Psoas muscle (tissue), 8 donors: ENCODE measurements at regions of chr5 and their contacts with region 1.

Region 1: DNA sequence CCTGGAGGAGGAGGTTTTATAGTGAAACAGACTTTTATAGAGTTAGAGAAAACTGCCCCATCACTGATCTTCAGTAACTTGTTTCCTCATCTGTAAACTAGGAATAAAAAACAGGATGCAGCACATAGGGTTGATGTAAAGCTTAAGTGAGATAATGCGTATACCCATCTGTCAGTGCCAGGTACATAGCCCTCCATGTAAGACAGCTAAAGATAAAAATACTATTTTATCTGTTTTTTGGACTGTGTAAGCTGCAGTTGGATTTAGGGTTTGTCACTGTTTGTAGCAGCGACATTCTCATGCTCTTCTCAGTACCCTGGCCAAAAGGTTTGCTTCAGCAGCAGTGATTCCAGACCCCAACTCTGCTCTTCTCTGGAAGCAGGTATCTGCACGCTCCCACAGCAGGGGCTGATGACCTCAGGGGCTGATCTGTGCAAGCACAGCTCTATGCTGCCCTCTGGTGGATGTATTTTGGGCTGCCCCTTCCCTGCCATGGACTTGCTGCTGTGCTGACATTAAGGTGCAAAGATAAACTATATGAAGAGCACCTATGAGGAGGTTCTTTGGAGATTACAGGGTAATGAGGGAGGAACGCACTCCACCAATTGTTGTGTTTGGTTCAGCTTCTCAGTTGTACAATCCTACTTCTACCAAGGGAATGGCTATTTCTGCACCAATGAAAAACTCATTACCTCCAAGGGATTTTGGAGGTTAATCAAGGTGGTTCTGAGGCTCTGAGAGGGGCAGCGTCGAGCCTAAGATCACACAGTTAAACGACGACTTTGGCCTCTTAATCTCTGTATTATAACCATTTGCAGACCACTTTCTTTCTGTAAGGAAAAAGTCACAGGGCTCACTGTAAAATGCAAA is 13.1 kb downstream of the HMHB1 start:
- DNase-seq: peak; percentile 71 to 87
- ATAC-seq: peak; percentile 93 to 99 (median 97)
- H3K4me3 ChIP-seq: no peak overlapping the region
- H3K27ac ChIP-seq: no peak overlapping the region
- H3K4me1 ChIP-seq: peaks cover 8% of the 10 kb centered on the region
- H3K27me3 ChIP-seq: no peaks in the 10 kb centered on the region
- CTCF ChIP-seq: peak; percentile 99

Region 2: DNA sequence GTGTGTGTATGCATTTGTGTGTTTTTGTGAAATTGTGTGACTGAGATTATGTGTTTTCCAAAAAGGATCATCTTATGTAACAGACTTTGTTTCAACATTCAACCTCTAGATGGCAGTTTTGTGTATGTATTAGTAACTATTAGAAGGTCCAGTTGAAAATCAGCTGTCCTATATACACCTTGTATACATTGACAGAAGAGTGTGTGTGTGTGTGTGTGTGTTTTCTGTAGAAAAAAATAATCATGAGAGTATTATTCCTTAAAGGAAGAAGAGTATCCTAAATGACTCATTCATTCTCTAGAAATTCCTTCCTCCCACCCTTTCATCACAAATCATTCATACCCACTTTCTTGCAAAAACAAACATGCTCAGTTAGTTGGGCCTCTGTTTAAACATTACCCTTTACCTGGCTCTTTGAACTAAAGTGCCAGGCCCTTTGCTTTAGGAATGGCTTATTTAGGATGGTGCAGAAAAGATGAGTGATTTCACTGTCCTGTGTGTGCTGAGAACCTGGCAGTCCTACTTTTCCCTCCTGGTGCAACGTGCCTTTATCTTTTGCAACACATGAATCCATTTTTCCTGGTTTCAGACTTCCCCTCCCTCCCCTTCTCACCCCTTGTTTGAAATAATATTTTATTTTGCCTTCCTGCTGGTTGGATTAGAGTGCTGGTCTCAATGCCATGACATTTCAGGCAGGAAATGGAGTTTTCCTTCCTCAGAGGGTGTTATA is 902.7 kb before region 1 on chr5:
- intact Hi-C with region 1: loop called (anchors 5 kb)
- DNase-seq: no peak
- ATAC-seq: peak; percentile 65 to 80 (median 71)
- H3K4me3 ChIP-seq: no peak overlapping the region
- H3K27ac ChIP-seq: no peak overlapping the region
- H3K4me1 ChIP-seq: peaks cover 23% of the 10 kb centered on the region
- H3K27me3 ChIP-seq: no peaks in the 10 kb centered on the region
- CTCF ChIP-seq: peak; percentile 65

Region 3: DNA sequence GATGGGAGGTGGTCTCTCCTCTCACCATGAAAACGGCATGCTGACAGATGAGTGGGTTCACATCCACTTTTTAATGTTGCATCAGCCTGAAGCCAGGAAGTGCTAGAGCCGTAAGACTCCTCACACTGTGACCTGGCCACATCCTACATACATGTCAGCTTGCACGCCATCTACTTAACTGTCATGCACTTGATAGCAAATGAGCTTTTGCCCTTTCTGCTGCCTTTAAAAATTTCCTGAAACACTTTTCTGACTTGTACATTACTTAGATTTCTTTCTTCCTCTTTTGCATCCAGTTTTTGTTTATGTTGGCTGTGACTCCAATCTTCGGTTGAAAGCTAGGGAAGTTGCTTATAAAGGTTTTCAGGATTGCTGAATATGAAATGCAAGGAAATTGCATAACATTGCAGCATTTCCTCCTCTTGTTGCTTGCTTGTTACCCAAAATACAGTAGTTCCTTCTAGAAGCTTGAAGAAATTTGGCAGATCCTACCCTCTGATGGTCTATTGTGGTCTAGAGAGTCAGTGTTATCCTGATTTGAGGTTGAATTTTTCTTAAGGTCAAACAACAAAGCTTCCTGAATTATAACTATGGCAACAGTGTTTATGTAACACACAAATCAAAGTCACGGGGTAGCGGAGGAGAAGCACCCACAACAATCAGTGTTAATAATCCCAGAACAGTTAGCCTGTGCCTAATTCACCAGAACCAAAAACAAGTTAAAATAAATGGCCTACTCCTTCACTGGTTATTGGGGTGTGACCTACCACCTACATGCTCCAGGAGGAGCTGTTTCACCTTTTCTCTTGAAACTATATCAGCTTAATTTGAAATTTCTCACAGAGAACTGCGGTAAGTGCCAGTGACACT is 822.4 kb before region 1 on chr5:
- intact Hi-C with region 1: loop called (anchors 5 kb)
- DNase-seq: no peak
- ATAC-seq: peak; percentile 53 to 60 (median 55)
- H3K4me3 ChIP-seq: no peak overlapping the region
- H3K27ac ChIP-seq: peak overlapping the region; percentile 62
- H3K4me1 ChIP-seq: peaks cover 24% of the 10 kb centered on the region
- H3K27me3 ChIP-seq: no peaks in the 10 kb centered on the region
- CTCF ChIP-seq: peak; percentile 57

Region 4: GRCh38 chr5:143106174-143106573 is 718.9 kb before region 1 on chr5:
- intact Hi-C with region 1: loop called in 1 of 2 experiments (anchors 10 kb)
- DNase-seq: peak; percentile 13 to 60
- ATAC-seq: peak; percentile 71 to 87 (median 82)
- H3K4me3 ChIP-seq: no peak overlapping the region
- H3K27ac ChIP-seq: no peak overlapping the region
- H3K4me1 ChIP-seq: peaks cover 34% of the 10 kb centered on the region
- H3K27me3 ChIP-seq: no peaks in the 10 kb centered on the region
- CTCF ChIP-seq: peak; percentile 23

Region 5: GRCh38 chr5:143413958-143414669 is 411.0 kb before region 1 on chr5:
- intact Hi-C with region 1: loop called in 1 of 2 experiments (anchors 10 kb)
- DNase-seq: peak; percentile 15 to 61
- ATAC-seq: peak; percentile 44 to 92 (median 88)
- H3K4me3 ChIP-seq: no peak overlapping the region
- H3K27ac ChIP-seq: peak overlapping the region; percentile 2
- H3K4me1 ChIP-seq: peaks cover 4% of the 10 kb centered on the region
- H3K27me3 ChIP-seq: no peaks in the 10 kb centered on the region
- CTCF ChIP-seq: no peak

Region 6: DNA sequence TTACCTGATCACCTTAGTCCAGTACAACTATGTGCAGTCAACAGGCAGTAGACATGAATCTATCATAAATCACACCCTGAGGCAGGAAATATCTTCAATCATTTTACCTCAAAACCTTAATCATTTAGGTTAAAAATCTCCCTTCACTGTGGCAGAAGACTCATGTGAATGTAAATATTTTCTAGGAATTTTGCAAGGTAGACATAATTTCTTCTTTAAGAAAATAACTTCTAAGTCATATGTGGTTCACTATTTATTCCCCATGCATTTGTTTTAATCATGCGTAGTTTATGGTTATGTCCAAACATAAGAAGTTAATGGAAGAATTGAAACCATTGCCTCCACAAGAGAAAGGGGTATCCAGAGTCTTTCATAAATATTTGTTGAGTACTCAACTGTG is 83.9 kb after region 1 on chr5:
- intact Hi-C with region 1: no loop called
- DNase-seq: no peak
- ATAC-seq: no peak
- H3K4me3 ChIP-seq: no peak overlapping the region
- H3K27ac ChIP-seq: no peak overlapping the region
- H3K4me1 ChIP-seq: no peaks in the 10 kb centered on the region
- H3K27me3 ChIP-seq: no peaks in the 10 kb centered on the region
- CTCF ChIP-seq: no peak

Region 7: DNA sequence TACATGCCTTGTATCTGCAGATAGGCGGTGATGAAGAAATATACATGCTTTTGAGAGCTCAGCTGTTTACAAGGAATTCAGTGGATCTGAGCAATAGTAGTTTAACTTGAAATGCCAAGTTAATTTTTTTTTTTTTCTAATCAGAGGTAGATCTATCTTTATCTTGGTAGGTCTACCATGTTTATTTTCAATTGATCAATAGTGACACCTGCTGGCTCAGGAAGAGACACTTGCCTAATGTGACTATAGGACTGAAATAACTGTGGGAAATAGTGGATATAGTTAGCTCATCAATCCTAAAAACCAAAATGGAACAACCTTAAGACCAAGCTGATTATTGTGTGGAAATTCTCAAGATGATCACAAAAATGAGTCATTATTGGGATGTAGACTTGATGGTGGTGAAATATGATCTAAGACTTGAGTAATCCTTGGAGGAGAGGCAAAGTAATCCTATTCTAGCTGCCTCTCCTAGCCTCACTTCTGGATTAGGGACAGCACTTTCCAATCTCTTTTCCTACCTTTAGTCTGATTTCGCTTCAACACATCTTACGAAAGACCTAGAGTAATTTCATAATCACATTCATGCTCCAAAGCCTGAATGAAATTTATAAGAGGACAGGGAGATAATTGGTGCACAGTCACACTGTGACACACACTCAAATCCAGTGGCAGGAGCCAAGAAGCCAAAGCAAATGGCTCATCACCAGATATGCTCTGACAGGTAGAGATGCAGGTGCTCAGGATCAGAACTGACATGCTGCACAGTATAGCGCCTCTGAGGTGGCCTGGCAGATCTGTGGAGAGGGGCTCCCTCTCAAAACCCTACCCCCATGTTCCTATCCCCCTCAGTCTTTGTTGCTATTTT is 143.2 kb after region 1 on chr5:
- intact Hi-C with region 1: loop called in 1 of 2 experiments (anchors 5 kb)
- DNase-seq: no peak
- ATAC-seq: peak in 3 of 4 donors; percentile 44 to 61 (median 48)
- H3K4me3 ChIP-seq: no peak overlapping the region
- H3K27ac ChIP-seq: no peak overlapping the region
- H3K4me1 ChIP-seq: no peaks in the 10 kb centered on the region
- H3K27me3 ChIP-seq: no peaks in the 10 kb centered on the region
- CTCF ChIP-seq: peak; percentile 53

Region 8: DNA sequence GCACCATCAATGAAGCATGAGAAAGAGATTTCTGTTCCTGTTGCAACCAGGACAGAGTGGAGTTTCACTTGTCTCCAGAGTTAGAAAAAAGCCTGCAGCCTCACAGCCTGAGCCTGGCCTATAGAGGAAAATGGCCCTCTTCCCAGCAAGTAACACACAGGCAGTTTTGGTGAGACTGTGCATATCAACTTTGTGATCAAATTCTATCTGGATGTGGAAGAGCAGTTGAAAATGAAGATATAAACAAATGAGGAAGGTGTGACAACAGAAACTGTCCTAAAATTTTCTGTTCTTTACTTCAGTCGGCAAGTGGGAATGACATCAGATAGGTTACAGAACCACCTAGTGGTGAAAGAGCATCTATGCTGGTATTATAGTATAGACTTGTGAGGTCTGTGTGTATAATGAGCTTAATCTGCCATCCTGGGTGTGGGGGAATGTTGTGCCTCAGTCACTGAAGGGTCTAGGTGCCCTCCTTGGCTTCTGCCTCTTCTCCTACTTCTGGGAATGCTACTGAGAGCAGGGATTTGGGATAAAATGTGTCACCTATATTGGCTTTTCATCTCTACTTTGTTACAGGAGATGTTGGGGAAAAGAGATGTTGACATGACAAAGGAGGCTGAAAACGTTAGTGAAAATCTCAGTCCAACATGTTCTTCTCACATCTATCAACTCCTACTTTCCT is 317.2 kb after region 1 on chr5:
- intact Hi-C with region 1: loop called in 1 of 2 experiments (anchors 10 kb)
- DNase-seq: no peak
- ATAC-seq: peak; percentile 53 to 81 (median 65)
- H3K4me3 ChIP-seq: no peak overlapping the region
- H3K27ac ChIP-seq: no peak overlapping the region
- H3K4me1 ChIP-seq: peaks cover 32% of the 10 kb centered on the region
- H3K27me3 ChIP-seq: no peaks in the 10 kb centered on the region
- CTCF ChIP-seq: peak; percentile 60